WTC11 (cell line): ENCODE measurements at regions of chr11 and their contacts with region 1.

Region 1: DNA sequence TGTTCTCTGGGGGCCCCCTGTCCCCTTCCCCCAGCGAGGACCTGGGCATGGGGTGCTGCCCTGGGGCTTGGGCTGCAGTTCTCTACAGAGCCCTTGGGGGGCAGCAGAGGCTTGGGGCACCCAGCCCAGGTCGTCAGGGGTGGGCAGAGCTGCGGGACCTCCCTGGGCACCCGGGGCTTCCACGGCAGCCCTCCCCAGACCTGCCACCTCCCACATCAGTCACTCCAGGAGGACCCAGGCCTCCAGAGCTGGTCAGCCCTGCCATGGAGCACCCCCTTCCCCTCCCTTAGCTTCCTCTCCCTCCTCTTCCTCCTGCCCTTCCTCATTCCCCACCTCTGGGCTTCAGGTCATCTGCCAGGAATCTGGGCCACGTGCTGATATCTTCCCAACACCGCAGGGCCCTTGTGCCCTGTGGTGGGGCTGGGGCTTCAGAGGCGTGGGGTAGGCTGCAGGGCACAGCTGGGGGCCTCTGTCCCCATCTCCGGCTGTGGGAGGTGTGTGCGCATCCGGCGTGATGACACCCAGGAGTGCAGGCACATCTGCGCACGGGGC is 5.8 kb downstream of the TSPAN4 start:
- DNase-seq: peak; percentile 75
- ATAC-seq: peak; percentile 5; the same call in 1 of the 2 replicates
- H3K4me3 Mint-ChIP-seq: peak overlapping the region; percentile 63
- H3K27ac Mint-ChIP-seq: no peak overlapping the region
- H3K4me1 Mint-ChIP-seq: peaks cover 19% of the 10 kb centered on the region
- H3K27me3 Mint-ChIP-seq: no peaks in the 10 kb centered on the region
- CTCF ChIP-seq: peak; percentile 83

Region 2: GRCh38 chr11:518463-519250 is 329.8 kb before region 1 on chr11:
- CTCF ChIA-PET with region 1: no interaction called
- POLR2A ChIA-PET with region 1: no interaction called
- DNase-seq: peak; percentile 82
- ATAC-seq: peak; percentile 97
- H3K4me3 Mint-ChIP-seq: peak overlapping the region; percentile 60
- H3K27ac Mint-ChIP-seq: 0 out of 2 replicates have a peak overlapping the region, but pooled peaks have one; percentile 70
- H3K4me1 Mint-ChIP-seq: no peaks in the 10 kb centered on the region; the same call in 1 of the 2 replicates
- H3K27me3 Mint-ChIP-seq: peaks cover 7% of the 10 kb centered on the region
- CTCF ChIP-seq: peak; percentile 98

Region 3: DNA sequence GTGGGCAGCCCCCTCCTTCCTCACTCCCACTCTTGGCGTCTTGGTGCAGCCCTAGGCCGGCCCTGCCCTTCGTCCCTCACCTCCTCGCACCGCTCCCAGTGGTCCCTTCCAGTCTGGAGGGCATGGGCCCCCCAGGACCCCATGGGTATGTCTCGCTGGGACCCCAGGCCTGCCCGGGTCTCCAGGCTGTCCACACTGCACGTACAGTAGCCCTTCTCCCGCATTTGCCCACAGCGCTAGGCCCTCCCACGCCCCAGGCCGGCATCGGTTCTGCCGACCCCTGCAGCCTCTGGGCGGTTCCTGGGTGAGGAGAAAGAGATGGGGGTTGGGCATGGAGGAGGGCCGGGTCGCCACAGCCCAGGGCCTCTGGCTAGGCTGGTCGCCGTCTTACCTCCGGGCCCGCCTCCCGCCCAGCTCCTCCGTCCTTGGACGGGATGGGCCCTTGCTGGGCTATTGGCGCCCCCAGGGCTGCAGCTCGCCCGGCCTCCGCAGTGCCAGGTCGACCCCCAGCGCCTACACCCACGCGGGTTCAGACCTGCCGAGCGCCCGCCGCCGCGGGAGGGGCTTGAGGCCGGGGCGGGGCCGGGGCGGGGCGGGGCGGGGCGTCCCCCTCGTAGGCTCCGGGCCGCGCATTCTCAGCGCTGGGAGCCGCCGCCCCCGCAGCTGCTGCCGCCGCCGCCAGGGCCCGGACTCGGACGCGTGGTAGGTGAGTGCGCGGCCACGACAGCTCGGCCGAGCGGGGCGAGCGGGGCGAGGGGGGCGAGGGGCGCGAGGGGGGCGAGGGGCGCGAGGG is 15.9 kb before region 1 on chr11 and contains the start of gene CD151:
- CTCF ChIA-PET with region 1: interaction called, 82 read pairs
- POLR2A ChIA-PET with region 1: interaction called, 35 read pairs
- DNase-seq: peak; percentile 70
- ATAC-seq: peak; percentile 33
- H3K4me3 Mint-ChIP-seq: peak within 1 kb of the TSS; percentile 73
- H3K27ac Mint-ChIP-seq: no peak within 1 kb of the TSS
- H3K4me1 Mint-ChIP-seq: peaks cover 40% of the 10 kb centered on the region
- H3K27me3 Mint-ChIP-seq: peaks cover 32% of the 10 kb centered on the region
- CTCF ChIP-seq: no peak
- total RNA-seq, gene CD151: 115 to 127 TPM (median 116 TPM) in 3 replicates

Region 4: GRCh38 chr11:862081-862661 is 13.7 kb after region 1 on chr11:
- CTCF ChIA-PET with region 1: interaction called, 24 read pairs
- POLR2A ChIA-PET with region 1: interaction called, 7 read pairs
- DNase-seq: peak; percentile 57
- ATAC-seq: peak; percentile 43
- H3K4me3 Mint-ChIP-seq: no peak overlapping the region
- H3K27ac Mint-ChIP-seq: no peak overlapping the region
- H3K4me1 Mint-ChIP-seq: peaks cover 30% of the 10 kb centered on the region
- H3K27me3 Mint-ChIP-seq: peaks cover 3% of the 10 kb centered on the region; the same call in 1 of the 2 replicates
- CTCF ChIP-seq: no peak

Region 5: DNA sequence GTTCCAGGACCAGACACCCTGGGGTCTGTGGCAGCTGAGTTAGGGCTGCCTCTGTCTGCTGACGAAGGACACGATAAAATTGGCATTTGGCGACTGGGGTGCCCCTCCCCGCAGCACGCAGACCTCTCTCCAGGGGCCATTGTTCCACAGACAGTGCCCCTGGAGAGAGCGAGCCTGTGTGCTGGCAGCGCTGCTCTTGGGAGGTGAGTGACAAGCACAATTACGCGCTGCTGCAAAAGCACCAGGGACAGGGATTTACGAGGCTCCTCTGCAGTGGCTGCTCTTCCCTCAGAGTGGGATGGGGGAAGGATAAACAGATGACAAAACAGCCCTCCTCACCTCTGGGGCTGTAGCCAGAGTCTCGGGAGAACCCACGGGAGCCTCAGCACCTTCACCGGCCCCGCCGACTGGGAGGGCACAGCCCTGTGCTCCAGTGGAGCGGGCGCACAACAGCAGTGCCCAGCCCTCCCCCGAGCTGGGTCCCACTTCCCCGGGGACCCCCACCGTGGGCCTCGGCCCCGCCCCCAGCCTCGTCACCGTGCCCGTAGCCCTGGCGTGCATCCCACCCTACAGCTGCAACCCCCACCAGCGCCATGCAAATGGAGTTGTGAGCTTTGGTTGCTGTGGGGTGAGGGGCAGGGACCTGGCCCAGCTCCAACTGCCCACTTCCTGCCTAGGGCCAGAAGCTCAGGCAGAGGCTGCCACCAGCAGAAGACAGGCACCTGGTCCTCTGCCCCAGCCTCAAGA is 42.5 kb after region 1 on chr11:
- CTCF ChIA-PET with region 1: interaction called, 11 read pairs
- POLR2A ChIA-PET with region 1: interaction called, 3 read pairs
- DNase-seq: no peak
- ATAC-seq: no peak
- H3K4me3 Mint-ChIP-seq: no peak overlapping the region
- H3K27ac Mint-ChIP-seq: peak overlapping the region; percentile 49
- H3K4me1 Mint-ChIP-seq: no peaks in the 10 kb centered on the region
- H3K27me3 Mint-ChIP-seq: no peaks in the 10 kb centered on the region
- CTCF ChIP-seq: no peak

Region 6: GRCh38 chr11:1017269-1018005 is 169.0 kb after region 1 on chr11:
- CTCF ChIA-PET with region 1: no interaction called
- POLR2A ChIA-PET with region 1: no interaction called
- DNase-seq: no peak
- ATAC-seq: no peak
- H3K4me3 Mint-ChIP-seq: no peak overlapping the region
- H3K27ac Mint-ChIP-seq: no peak overlapping the region
- H3K4me1 Mint-ChIP-seq: 0 out of 2 replicates have a peak, but pooled peaks cover 3% of the 10 kb centered on the region
- H3K27me3 Mint-ChIP-seq: no peaks in the 10 kb centered on the region; the same call in 1 of the 2 replicates
- CTCF ChIP-seq: no peak

Region 7: DNA sequence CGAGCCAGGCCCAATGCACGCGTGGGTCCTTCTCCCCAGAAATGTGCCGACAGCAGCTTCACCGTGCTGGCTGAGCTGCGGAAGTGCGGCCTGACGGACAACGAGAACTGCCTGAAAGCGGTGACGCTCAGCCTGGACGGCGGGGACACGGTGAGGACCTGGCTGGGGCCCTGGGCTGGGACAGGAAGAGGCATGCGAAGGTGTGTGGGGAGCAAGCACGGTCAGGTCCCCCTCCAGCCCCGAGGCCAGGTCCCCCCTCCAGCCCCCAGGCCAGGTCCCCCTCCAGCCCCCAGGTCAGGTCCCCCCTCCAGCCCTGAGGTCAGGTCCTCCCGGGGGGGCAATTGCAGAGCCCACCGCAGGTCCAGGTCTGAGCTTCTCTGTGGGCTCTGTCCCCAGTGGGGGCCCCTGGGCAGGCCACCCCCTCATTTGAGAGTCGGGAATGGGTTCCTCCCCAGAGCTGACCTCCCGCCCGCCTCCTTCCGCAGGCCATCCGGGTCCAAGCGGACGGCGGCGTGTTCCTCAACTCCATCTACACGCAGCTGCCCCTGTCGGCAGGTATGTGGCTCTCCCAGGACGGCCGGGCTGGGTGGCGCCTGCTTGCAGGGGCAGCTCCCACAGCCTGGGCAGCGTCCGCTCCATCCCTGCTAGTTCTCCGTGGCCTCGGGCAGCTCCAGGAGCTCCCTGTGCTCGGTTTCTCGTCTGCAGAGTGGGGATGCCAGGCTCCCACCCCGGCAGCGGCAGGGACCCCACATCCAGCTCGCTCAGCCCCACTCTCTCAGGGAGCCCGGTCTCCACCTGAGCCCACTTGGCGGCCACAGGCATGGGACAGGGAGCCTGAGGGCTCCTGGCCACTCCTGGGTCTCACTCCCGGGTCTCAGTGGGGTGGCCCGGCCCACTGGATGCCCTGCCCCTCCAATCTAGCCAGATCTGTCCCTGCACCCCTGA is 382.3 kb after region 1 on chr11:
- CTCF ChIA-PET with region 1: no interaction called
- POLR2A ChIA-PET with region 1: no interaction called
- DNase-seq: no peak
- ATAC-seq: no peak
- H3K4me3 Mint-ChIP-seq: no peak overlapping the region
- H3K27ac Mint-ChIP-seq: no peak overlapping the region
- H3K4me1 Mint-ChIP-seq: no peaks in the 10 kb centered on the region
- H3K27me3 Mint-ChIP-seq: no peaks in the 10 kb centered on the region
- CTCF ChIP-seq: no peak